ENCODE measurements at regions of chr4 and their contacts with region 1.

Region 1: GRCh38 chr4:76949276-76950051 is at the start of gene SEPTIN11:
- DNase-seq: peak; percentile 95
- H3K4me3 ChIP-seq: peak within 1 kb of the TSS; percentile 71 to 92 (median 83)
- H3K27ac ChIP-seq: peak within 1 kb of the TSS; percentile 90 to 96 (median 92)
- H3K4me1 ChIP-seq: peaks cover 5 to 41% (median 35%) of the 10 kb centered on the region in 4 donors
- H3K27me3 ChIP-seq: no peaks in the 10 kb centered on the region
- CTCF ChIP-seq: no peak
- EP300 ChIP-seq: no peak
- POLR2A ChIP-seq: peak; percentile 75
- total RNA-seq, gene SEPTIN11: 74.1 to 144 (median 86.9) TPM

Region 2: GRCh38 chr4:76856243-76857073 is 93.0 kb before region 1 on chr4:
- intact Hi-C with region 1: no loop called
- DNase-seq: no peak
- H3K4me3 ChIP-seq: no peak overlapping the region
- H3K27ac ChIP-seq: peak overlapping the region in 1 of 4 donors; percentile 28
- H3K4me1 ChIP-seq: peaks cover 6 to 15% (median 9%) of the 10 kb centered on the region in 4 donors
- H3K27me3 ChIP-seq: no peaks in the 10 kb centered on the region
- CTCF ChIP-seq: no peak
- EP300 ChIP-seq: no peak
- POLR2A ChIP-seq: no peak

Region 3: GRCh38 chr4:76993787-76994641 is 44.5 kb after region 1 on chr4:
- intact Hi-C with region 1: loop called (anchors 5 kb)
- DNase-seq: no peak
- H3K4me3 ChIP-seq: no peak overlapping the region
- H3K27ac ChIP-seq: no peak overlapping the region
- H3K4me1 ChIP-seq: peaks cover 0 to 15% (median 9%) of the 10 kb centered on the region in 4 donors
- H3K27me3 ChIP-seq: no peaks in the 10 kb centered on the region
- CTCF ChIP-seq: no peak
- EP300 ChIP-seq: no peak
- POLR2A ChIP-seq: no peak